Activated naive CD4-positive, alpha-beta T cell treated with anti-CD3 and anti-CD28 coated beads for 36 hours (primary cell): ENCODE measurements at regions of chr1 and their contacts with region 1.

Region 1: GRCh38 chr1:65002508-65003315 is 36.4 kb upstream of the JAK1 start:
- DNase-seq: peak; percentile 81
- H3K4me3 Mint-ChIP-seq: peak overlapping the region; percentile 82
- H3K27ac Mint-ChIP-seq: peak overlapping the region; percentile 88
- H3K4me1 Mint-ChIP-seq: peaks cover 35% of the 10 kb centered on the region
- H3K27me3 Mint-ChIP-seq: no peaks in the 10 kb centered on the region

Region 2: GRCh38 chr1:64539781-64540218 is 462.9 kb before region 1 on chr1:
- CTCF ChIA-PET with region 1: no interaction called
- intact Hi-C with region 1: loop called (anchors 5 kb)
- DNase-seq: peak; percentile 31
- H3K4me3 Mint-ChIP-seq: peak overlapping the region; percentile 47
- H3K27ac Mint-ChIP-seq: no peak overlapping the region
- H3K4me1 Mint-ChIP-seq: peaks cover 55% of the 10 kb centered on the region
- H3K27me3 Mint-ChIP-seq: no peaks in the 10 kb centered on the region

Region 3: GRCh38 chr1:64956733-64957441 is 45.8 kb before region 1 on chr1:
- CTCF ChIA-PET with region 1: no interaction called
- intact Hi-C with region 1: loop called (anchors 2 kb)
- DNase-seq: peak; percentile 79
- H3K4me3 Mint-ChIP-seq: no peak overlapping the region
- H3K27ac Mint-ChIP-seq: no peak overlapping the region
- H3K4me1 Mint-ChIP-seq: peaks cover 63% of the 10 kb centered on the region
- H3K27me3 Mint-ChIP-seq: no peaks in the 10 kb centered on the region

Region 4: GRCh38 chr1:65036545-65037180 is 34.0 kb after region 1 on chr1:
- CTCF ChIA-PET with region 1: interaction called, 5 read pairs
- intact Hi-C with region 1: loop called (anchors 2 kb)
- DNase-seq: no peak
- H3K4me3 Mint-ChIP-seq: no peak overlapping the region
- H3K27ac Mint-ChIP-seq: no peak overlapping the region
- H3K4me1 Mint-ChIP-seq: peaks cover 11% of the 10 kb centered on the region
- H3K27me3 Mint-ChIP-seq: no peaks in the 10 kb centered on the region

Region 5: DNA sequence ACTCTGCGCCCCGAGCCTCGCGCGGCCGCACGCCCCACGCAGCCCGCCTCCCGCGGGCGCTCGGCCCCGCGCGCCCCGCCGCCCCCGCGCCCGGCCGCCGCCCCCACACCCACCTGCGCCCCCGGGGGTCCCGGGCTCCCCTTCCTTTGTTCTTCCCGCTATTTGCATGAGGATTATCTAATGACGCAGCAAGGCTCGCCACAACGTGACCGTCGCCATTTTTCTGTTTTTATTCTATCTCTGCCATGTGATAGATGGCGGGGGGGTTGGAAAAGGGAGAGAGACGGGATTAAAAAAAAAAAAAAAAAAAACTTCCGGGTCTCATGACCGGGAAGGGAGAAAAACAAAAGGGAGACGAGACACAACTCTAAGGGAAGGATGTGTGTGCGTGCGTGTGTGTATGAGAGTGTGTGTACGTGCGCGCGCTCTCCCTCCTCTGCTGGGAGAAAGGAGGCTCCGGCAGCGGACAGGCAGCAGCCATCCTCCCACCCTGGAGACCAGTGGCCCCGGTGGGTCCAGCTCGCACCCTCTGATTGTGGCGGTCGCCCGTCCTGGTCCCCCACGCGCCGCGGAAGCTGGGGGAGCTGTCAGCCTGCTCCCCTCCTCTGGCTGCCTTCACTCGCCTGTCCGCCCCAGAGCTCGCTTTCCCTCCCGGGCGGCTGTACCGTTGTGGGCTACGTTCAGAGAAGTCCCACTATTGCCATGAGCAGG is 64.9 kb after region 1 on chr1:
- CTCF ChIA-PET with region 1: no interaction called
- intact Hi-C with region 1: loop called (anchors 1 kb)
- DNase-seq: peak; percentile 71
- H3K4me3 Mint-ChIP-seq: peak overlapping the region; percentile 87
- H3K27ac Mint-ChIP-seq: peak overlapping the region; percentile 95
- H3K4me1 Mint-ChIP-seq: peaks cover 51% of the 10 kb centered on the region
- H3K27me3 Mint-ChIP-seq: no peaks in the 10 kb centered on the region